ENCODE measurements at regions of chrX and their contacts with region 1.

Region 1: GRCh38 chrX:70096052-70096451 is 33.8 kb downstream of the OTUD6A start:
- DNase-seq: no peak
- H3K4me3 ChIP-seq: no peak overlapping the region
- H3K27ac ChIP-seq: no peak overlapping the region
- H3K4me1 ChIP-seq: no peaks in the 10 kb centered on the region
- H3K27me3 ChIP-seq: no peaks in the 10 kb centered on the region
- CTCF ChIP-seq: peak in 1 of 4 experiments; percentile 20
- POLR2A ChIP-seq: no peak

Region 2: GRCh38 chrX:69493193-69493592 is 602.9 kb before region 1 on chrX:
- intact Hi-C with region 1: loop called (anchors 5 kb)
- DNase-seq: no peak
- H3K4me3 ChIP-seq: no peak overlapping the region
- H3K27ac ChIP-seq: no peak overlapping the region
- H3K4me1 ChIP-seq: no peaks in the 10 kb centered on the region
- H3K27me3 ChIP-seq: no peaks in the 10 kb centered on the region
- CTCF ChIP-seq: peak in 2 of 4 experiments; percentile 32 to 57
- POLR2A ChIP-seq: no peak

Measured in prostate gland (tissue), 2 donors.